ENCODE measurements at regions of chr11 and their contacts with region 1.

Region 1: DNA sequence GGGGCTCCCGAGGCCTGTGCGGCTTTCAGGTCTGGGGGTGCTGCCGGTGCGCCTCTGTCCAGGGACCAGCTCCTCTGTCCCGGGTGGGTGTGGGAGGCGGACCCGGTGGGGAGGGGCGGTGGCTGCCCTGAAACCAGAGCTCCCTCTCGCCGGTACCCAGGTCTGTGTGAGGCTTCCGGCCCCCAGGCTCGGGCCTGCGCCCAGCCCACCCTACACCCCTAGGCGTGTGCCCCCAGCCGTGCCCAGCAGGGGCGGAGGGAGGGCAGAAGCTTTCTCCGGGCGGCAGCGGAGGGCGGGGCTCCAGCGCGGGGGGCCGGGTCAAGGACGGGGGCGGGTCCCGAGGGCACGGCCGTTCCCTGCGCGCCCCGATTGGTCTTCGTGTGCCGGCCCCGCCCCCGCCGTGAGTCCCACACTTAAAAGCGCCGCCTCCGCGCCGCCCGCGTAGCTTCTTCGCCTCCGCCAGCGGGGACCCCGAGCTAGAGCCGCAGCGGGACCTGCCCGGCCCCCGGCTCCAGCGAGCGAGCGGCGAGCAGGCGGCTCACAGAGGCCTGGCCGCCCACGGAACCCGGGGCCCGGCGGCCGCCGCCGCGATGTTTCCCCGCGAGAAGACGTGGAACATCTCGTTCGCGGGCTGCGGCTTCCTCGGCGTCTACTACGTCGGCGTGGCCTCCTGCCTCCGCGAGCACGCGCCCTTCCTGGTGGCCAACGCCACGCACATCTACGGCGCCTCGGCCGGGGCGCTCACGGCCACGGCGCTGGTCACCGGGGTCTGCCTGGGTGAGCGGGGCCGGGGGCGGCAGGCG is 616 bp downstream of the PNPLA2 start:
- DNase-seq: peak; percentile 89
- H3K4me3 Mint-ChIP-seq: peak overlapping the region; percentile 72
- H3K27ac Mint-ChIP-seq: peak overlapping the region; percentile 40
- H3K4me1 Mint-ChIP-seq: peaks cover 11% of the 10 kb centered on the region
- H3K27me3 Mint-ChIP-seq: no peaks in the 10 kb centered on the region
- CTCF ChIP-seq: no peak

Region 2: GRCh38 chr11:695538-696248 is 123.6 kb before region 1 on chr11 and contains the start of gene TMEM80:
- CTCF ChIA-PET with region 1: no interaction called
- POLR2A ChIA-PET with region 1: interaction called, 21 read pairs
- intact Hi-C with region 1: no loop called
- DNase-seq: peak; percentile 99
- H3K4me3 Mint-ChIP-seq: peak within 1 kb of the TSS; percentile 81
- H3K27ac Mint-ChIP-seq: peak within 1 kb of the TSS; percentile 98
- H3K4me1 Mint-ChIP-seq: peaks cover 33% of the 10 kb centered on the region
- H3K27me3 Mint-ChIP-seq: no peaks in the 10 kb centered on the region
- CTCF ChIP-seq: no peak
- total RNA-seq, gene TMEM80: 12.2 and 12.8 TPM in 2 replicates

Region 3: DNA sequence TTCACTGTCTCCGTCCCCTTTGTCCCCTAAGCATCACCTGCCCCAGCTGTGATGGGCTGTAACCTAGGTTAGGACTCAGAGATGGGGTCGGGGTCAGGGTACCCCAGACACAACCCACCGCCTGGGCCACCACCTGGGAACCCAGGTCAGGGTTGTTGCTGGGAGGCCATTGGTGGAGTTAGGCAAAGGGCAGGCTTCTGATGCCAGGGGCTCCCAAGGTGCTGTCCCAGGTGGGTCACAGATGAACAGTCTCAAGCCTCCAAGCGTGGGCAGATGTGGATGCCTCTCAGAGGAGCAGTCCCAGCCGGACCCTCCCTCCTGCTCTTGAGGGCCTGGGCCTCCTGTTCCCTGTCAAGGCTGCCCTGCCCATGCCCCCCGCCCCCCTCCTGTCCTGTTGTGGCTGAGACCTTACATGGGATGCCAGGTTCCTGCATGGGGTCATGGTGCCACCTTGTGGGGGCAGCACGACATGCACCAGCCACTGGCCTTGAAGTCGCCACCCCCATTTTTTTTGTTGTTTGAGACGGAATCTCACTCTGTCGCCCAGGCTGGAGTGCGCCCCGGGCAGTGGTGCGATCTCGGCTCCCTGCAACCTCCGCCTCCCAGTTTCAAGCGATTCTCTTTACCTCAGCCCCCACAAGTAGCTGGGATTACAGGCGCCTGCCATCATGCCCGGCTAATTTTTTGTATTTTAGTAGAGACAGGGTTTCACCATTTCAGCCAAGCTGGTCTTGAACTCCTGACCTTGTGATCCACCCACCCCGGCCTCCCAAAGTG is 54.1 kb before region 1 on chr11:
- CTCF ChIA-PET with region 1: no interaction called
- POLR2A ChIA-PET with region 1: interaction called, 10 read pairs
- intact Hi-C with region 1: no loop called
- DNase-seq: peak; percentile 62
- H3K4me3 Mint-ChIP-seq: no peak overlapping the region
- H3K27ac Mint-ChIP-seq: no peak overlapping the region
- H3K4me1 Mint-ChIP-seq: peaks cover 16% of the 10 kb centered on the region
- H3K27me3 Mint-ChIP-seq: no peaks in the 10 kb centered on the region
- CTCF ChIP-seq: peak; percentile 54

Region 4: DNA sequence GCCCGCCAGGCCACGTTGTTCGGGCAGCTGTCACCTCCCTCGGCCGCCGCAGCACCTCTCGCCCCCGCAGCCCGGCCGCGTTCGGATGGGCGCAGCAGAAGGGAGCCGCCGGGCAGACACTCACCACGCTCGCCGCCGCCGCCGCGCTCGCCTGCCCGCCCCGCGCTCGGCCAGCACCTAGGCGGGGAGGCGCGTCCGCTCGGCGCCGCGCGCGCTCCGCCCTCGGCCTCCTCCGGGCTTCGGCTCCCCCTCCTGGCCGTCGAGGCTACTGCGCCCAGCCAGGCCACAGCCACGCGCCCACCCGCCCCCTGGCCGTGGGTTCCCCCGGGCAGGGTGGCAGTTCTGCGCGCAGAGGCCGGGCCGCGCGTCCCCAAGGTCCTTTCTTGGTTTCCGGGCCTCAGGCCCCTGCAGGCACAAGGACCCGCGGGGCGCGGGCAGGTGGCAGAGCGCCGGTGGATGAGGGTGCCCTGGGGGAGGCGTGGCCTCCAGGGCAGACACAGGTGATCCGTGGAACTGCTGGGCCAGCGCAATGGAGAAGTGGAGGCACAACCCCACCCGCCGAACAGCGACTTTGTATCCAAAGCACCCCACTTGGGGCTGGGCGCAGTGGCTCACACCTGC is 21.1 kb before region 1 on chr11 and contains the start of gene SLC25A22:
- CTCF ChIA-PET with region 1: interaction called, 3 read pairs
- POLR2A ChIA-PET with region 1: interaction called, 149 read pairs
- intact Hi-C with region 1: no loop called
- DNase-seq: peak; percentile 74
- H3K4me3 Mint-ChIP-seq: peak within 1 kb of the TSS; percentile 84
- H3K27ac Mint-ChIP-seq: peak within 1 kb of the TSS; percentile 94
- H3K4me1 Mint-ChIP-seq: no peaks in the 10 kb centered on the region
- H3K27me3 Mint-ChIP-seq: no peaks in the 10 kb centered on the region
- CTCF ChIP-seq: peak; percentile 88
- total RNA-seq, gene SLC25A22: 34.0 and 36.5 TPM in 2 replicates

Region 5: DNA sequence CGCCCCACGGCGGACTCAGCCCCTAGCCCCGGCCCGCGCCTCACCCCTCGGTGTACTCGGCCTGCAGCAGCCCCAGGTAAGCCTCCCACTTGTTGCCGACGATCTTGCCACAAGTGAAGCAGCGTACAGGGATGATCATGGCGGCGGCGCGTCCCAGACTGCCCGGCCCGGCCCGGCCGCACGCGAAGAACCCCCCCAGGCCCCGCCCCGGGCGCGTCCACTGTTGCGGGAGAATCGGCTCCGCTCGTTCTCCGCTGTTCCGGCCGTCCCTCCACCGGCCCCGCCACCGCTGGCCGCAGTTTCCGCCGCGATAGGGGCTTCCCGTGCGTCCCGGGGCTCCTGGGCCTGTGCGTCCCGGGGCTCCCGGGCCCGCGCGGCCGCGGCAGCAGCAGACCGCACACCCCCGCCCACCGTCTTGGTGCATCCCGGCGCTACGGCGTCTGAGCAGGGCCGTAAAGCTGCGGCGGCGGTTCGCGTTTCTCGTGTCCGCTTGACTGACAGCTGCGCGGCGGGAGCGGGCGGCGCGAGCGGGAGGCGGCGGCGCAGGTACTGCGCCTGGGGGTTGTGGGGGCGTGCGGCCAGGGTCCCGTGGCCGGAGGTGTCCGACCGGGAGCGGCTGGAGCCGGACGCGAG is 23.2 kb after region 1 on chr11 and contains the starts of genes POLR2L and TSPAN4:
- CTCF ChIA-PET with region 1: interaction called, 5 read pairs
- POLR2A ChIA-PET with region 1: interaction called, 274 read pairs
- intact Hi-C with region 1: no loop called
- DNase-seq: peak; percentile 87
- H3K4me3 Mint-ChIP-seq: peak within 1 kb of the TSS; percentile 87
- H3K27ac Mint-ChIP-seq: peak within 1 kb of the TSS; percentile 90
- H3K4me1 Mint-ChIP-seq: peaks cover 31% of the 10 kb centered on the region
- H3K27me3 Mint-ChIP-seq: no peaks in the 10 kb centered on the region
- CTCF ChIP-seq: no peak
- total RNA-seq, gene POLR2L: 96.9 and 118 TPM in 2 replicates
- total RNA-seq, gene TSPAN4: 118 and 148 TPM in 2 replicates

Region 6: DNA sequence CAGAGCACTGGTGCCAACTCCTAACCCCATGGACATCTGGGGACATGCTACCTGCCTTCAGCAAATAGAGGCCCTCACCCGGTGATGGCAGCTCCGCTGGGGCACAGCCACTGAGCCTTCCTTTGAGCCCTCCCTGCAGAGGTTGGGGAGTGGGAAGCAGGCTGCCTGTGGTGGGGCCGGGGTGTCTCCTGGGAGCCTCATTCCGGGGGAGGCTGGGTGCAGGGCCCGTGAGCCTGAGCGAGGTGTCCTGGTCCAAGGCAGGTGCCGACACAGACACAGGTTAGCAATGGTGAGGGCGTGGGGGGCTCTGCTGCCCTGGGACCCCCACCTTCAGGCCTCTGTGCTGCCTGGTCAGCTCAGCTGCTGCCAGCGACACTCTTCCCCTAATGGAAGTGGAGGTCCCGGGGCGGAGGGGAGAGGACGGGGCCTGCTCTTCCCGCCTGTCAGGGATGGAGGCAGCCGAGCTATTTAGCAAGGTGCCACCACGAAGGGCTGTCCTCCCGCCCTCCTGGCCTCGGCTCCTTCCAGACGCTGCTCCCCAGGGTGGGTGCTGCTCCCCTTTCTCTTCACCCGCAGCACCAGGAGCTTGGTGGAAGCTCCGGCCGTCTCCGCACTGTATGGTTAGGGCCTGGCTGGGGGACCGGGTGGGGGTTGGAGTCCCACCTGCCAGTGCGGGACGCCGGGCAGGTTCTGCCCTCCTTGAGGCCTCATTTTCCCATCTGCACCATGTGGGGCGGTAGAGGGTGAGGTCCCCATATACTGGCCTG is 34.5 kb after region 1 on chr11:
- CTCF ChIA-PET with region 1: no interaction called
- POLR2A ChIA-PET with region 1: no interaction called
- intact Hi-C with region 1: no loop called
- DNase-seq: no peak
- H3K4me3 Mint-ChIP-seq: no peak overlapping the region
- H3K27ac Mint-ChIP-seq: no peak overlapping the region
- H3K4me1 Mint-ChIP-seq: no peaks in the 10 kb centered on the region
- H3K27me3 Mint-ChIP-seq: no peaks in the 10 kb centered on the region
- CTCF ChIP-seq: no peak

Region 7: DNA sequence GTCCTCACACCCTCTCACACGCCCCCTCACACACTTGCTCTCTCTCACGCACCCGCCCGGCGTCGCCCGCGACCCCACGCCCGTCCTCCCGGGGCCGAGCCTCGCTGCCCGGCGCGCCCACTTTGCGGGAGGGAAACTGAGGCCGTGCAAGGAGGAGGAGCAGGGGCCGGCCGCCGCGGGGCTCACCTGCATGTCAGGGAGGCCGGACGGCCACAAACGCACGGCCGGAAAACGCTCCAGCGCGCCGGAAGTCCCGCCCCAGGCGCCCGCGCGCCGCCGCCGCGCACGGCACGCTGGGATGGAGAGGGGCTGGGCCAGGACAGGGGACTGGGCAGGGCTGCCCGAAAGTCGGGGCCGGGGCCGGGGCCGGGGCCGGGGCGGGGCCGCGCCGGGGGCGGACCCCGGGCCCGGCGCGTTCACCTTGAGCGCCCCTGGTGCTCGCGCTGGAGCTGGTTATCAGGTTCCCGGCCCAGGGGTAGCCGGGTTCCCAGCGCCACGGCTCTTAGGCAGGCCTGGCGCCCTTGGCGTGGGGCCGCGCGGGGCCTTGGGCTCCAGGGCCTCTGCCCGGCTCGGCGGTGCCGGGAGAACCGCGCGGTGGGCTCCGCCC is 91.4 kb after region 1 on chr11 and contains the start of gene CHID1:
- CTCF ChIA-PET with region 1: no interaction called
- POLR2A ChIA-PET with region 1: interaction called, 11 read pairs
- intact Hi-C with region 1: no loop called
- DNase-seq: peak; percentile 86
- H3K4me3 Mint-ChIP-seq: peak within 1 kb of the TSS; percentile 90
- H3K27ac Mint-ChIP-seq: peak within 1 kb of the TSS; percentile 39
- H3K4me1 Mint-ChIP-seq: peaks cover 11% of the 10 kb centered on the region
- H3K27me3 Mint-ChIP-seq: no peaks in the 10 kb centered on the region
- CTCF ChIP-seq: no peak
- total RNA-seq, gene CHID1: 82.1 and 94.8 TPM in 2 replicates

Region 8: GRCh38 chr11:1073261-1073724 is 254.0 kb after region 1 on chr11:
- CTCF ChIA-PET with region 1: no interaction called
- POLR2A ChIA-PET with region 1: no interaction called
- intact Hi-C with region 1: no loop called
- DNase-seq: peak; percentile 89
- H3K4me3 Mint-ChIP-seq: no peak overlapping the region
- H3K27ac Mint-ChIP-seq: peak overlapping the region; percentile 46
- H3K4me1 Mint-ChIP-seq: no peaks in the 10 kb centered on the region
- H3K27me3 Mint-ChIP-seq: no peaks in the 10 kb centered on the region
- CTCF ChIP-seq: no peak

Measured in MCF 10A (cell line).